ENCODE measurements at regions of chr21 and their contacts with region 1.

Region 1: DNA sequence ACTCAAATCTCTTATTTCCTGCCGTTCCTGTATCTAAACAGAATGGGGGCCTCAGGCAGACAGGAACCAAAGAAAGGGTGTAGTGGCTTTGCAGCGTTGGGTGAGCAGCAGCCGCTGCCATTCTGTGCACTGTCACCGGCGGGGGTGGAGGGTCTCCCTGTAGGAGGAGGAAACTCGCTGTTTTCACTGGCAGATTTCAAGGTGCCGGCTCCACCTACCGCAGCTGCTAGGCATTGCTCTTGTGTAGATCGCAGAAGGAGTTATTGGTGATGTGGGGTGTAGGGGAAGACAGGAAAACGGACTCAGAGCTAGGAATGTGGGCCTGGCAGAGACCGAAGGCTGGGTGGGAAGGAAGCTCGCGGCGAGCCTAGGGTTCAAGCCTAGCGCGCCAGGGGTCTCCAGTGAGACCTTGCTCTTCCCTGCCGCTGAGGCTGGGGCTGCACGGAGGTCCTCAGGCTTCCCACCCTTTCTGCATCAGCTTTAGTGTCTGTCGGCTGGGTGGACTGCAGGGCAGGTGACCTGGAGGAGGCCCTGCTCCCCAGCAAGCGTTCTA is 20.8 kb downstream of the ATP5PO start:
- DNase-seq: peak; percentile 59
- H3K4me3 ChIP-seq: peak overlapping the region in 2 of 4 donors; percentile 6 to 30
- H3K27ac ChIP-seq: no peak overlapping the region
- H3K4me1 ChIP-seq: peaks cover 0 to 14% (median 9%) of the 10 kb centered on the region in 4 donors
- H3K27me3 ChIP-seq: no peaks in the 10 kb centered on the region
- CTCF ChIP-seq: peak; percentile 48 to 61 (median 53)
- EP300 ChIP-seq: no peak
- POLR2A ChIP-seq: no peak

Region 2: GRCh38 chr21:33655591-33656221 is 239.1 kb before region 1 on chr21:
- in situ Hi-C with region 1: loop called in 1 of 4 experiments (anchors 25 kb)
- intact Hi-C with region 1: no loop called
- DNase-seq: no peak
- H3K4me3 ChIP-seq: no peak overlapping the region
- H3K27ac ChIP-seq: peak overlapping the region; percentile 10 to 68 (median 42)
- H3K4me1 ChIP-seq: peaks cover 11 to 62% (median 31%) of the 10 kb centered on the region in 4 donors
- H3K27me3 ChIP-seq: no peaks in the 10 kb centered on the region
- CTCF ChIP-seq: no peak
- EP300 ChIP-seq: no peak
- POLR2A ChIP-seq: no peak

Region 3: DNA sequence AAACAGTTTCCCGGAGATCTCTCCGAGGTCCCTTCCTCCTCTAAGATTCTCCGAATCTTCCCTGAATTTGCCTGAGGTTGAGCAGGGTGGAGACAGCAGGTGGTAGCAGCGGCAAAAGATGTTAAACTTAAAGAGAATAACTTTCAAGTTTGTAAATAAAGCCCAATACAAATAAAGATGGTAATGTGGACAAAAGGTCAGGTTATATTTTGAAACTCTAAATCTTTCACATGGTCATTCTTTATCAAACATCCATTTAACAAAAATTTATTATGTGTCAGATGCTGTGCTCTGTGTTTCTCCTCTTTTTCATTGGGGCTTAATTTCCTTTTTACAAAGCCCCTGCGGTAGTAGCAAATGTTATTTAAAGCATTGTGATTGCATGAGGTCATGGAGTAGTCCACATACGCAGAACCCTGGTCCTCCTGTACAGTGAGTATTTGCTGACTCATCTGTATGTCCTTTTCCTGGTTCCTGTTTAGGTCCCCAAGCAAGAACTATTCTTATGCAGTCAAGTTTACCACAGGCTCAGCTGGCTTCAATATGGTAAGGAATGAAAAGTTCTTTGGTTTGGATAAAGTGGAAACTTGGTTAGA is 133.3 kb before region 1 on chr21:
- in situ Hi-C with region 1: no loop called
- intact Hi-C with region 1: no loop called
- DNase-seq: no peak
- H3K4me3 ChIP-seq: no peak overlapping the region
- H3K27ac ChIP-seq: peak overlapping the region; percentile 46 to 64 (median 56)
- H3K4me1 ChIP-seq: peaks cover 0 to 10% (median 6%) of the 10 kb centered on the region in 4 donors
- H3K27me3 ChIP-seq: no peaks in the 10 kb centered on the region
- CTCF ChIP-seq: no peak
- EP300 ChIP-seq: no peak
- POLR2A ChIP-seq: no peak

Region 4: DNA sequence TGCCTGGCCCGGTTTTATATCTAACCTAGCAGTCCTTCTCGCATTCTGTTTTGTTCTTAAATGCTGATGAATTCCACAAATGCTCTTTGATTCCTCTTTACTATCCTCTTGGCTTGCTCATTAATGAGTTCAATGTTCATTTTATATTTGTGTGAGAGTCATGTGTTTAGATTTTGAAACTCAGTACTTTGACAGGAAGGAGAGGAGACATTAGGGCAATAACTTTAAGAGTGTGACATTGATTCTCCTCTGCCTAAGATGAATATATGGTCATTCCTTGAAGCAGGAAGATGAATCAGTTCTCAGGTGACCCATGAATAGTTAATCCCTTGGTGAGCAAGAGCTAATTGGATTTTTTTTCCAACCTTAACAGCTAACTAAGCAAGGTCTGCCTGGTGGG is 262.7 kb after region 1 on chr21:
- in situ Hi-C with region 1: no loop called
- intact Hi-C with region 1: no loop called
- DNase-seq: no peak
- H3K4me3 ChIP-seq: no peak overlapping the region
- H3K27ac ChIP-seq: no peak overlapping the region
- H3K4me1 ChIP-seq: no peaks in the 10 kb centered on the region
- H3K27me3 ChIP-seq: no peaks in the 10 kb centered on the region
- CTCF ChIP-seq: no peak
- EP300 ChIP-seq: no peak
- POLR2A ChIP-seq: no peak

Measured in transverse colon (tissue), 4 donors.